GM13977 (cell line): ENCODE measurements at regions of chr1 and their contacts with region 1.

Region 1: DNA sequence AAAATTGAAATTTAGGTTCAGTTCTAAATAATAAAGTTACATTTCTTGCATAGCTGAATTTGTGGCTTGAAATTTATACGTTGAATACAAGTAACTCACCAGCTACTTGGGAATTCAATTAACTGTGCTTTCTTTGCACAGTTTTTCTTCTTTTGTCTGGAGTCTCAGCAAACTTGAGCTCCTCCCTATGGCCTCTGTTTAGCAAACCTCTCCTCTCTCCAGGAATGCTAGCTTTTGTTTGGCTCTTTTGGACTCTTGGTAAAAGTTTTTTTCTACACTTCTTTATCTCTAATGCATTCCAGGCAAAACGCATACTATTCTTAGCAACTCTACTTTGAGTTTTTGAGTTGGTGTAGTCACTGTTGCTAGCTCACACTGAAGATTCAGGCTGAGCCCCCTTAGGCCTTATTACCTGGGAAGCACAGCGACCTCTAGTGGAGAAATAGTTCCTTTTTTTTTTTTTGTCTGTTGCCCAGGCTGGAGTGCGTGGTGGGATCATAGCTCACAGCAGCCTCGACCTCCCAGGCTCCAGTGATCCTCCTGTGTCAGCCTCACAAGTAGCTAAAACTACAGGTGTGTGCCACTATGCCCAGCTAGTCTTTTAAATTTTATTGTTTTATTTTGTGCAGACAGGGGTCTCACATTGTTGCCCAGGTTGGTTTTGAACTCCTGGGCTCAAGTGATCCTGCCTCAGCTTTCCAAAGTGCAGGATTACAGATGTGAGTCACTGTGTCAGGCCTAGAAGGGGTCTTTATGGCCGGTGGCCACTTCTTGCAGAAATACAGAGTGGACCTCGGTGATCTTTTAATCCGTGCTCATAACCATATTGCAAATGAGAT is 61.7 kb downstream of the CASQ2 start:
- DNase-seq: peak; percentile 41
- CTCF ChIP-seq: peak; percentile 62

Region 2: DNA sequence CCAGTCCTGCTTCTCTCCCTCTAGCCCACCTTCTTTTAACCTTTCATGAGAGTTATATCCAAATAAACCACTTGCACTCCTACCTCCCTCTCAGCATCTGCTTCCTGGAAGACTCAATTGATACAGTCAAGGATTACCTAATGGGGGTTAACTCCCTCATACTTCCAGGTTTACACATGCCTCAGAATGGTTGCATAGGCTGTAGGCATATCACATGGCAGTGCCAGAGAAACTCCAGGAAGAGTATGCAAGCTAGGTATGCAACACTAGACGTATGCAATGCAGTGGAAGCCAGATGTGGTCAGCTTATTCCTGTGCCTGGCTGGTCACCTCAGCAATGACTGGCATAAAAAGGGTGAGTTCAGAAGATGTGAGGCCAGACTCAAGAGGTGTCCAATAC is 97.8 kb before region 1 on chr1:
- in situ Hi-C with region 1: loop called (anchors 10 kb)
- DNase-seq: no peak
- CTCF ChIP-seq: no peak